HepG2 (cell line): ENCODE measurements at regions of chr3 and their contacts with region 1.

Region 1: GRCh38 chr3:30606301-30607031 is at the start of gene TGFBR2:
- DNase-seq: peak; percentile 98
- ATAC-seq: peak; percentile 98
- H3K4me3 ChIP-seq: peak within 1 kb of the TSS; percentile 96 to 100 (median 99)
- H3K27ac ChIP-seq: peak within 1 kb of the TSS; percentile 93
- H3K4me1 ChIP-seq: peaks cover 52% of the 10 kb centered on the region
- H3K27me3 ChIP-seq: peaks cover 0 to 2% of the 10 kb centered on the region in 2 experiments; a peak in 1 of 5 replicates
- CTCF ChIP-seq: 0 out of 2 replicates have a peak, but pooled peaks have one; percentile 10
- EP300 ChIP-seq: peak in 1 of 2 experiments; percentile 92; a peak in 2 of 4 replicates
- POLR2A ChIP-seq: peak; percentile 73 to 93
- RAD21 ChIP-seq: peak; percentile 92
- total RNA-seq, gene TGFBR2: 68.1 and 82.2 TPM in 2 replicates

Region 2: GRCh38 chr3:30042274-30042859 is 564.1 kb before region 1 on chr3:
- CTCF ChIA-PET with region 1: no interaction called
- POLR2A ChIA-PET with region 1: no interaction called
- in situ Hi-C with region 1: no loop called
- intact Hi-C with region 1: loop called (anchors 1 kb)
- DNase-seq: peak; percentile 66
- ATAC-seq: peak; percentile 82
- H3K4me3 ChIP-seq: no peak overlapping the region
- H3K27ac ChIP-seq: no peak overlapping the region
- H3K4me1 ChIP-seq: no peaks in the 10 kb centered on the region; the same call in 1 of the 2 replicates
- H3K27me3 ChIP-seq: no peaks in the 10 kb centered on the region
- CTCF ChIP-seq: peak; percentile 88
- EP300 ChIP-seq: no peak
- POLR2A ChIP-seq: no peak
- RAD21 ChIP-seq: peak; percentile 78

Region 3: DNA sequence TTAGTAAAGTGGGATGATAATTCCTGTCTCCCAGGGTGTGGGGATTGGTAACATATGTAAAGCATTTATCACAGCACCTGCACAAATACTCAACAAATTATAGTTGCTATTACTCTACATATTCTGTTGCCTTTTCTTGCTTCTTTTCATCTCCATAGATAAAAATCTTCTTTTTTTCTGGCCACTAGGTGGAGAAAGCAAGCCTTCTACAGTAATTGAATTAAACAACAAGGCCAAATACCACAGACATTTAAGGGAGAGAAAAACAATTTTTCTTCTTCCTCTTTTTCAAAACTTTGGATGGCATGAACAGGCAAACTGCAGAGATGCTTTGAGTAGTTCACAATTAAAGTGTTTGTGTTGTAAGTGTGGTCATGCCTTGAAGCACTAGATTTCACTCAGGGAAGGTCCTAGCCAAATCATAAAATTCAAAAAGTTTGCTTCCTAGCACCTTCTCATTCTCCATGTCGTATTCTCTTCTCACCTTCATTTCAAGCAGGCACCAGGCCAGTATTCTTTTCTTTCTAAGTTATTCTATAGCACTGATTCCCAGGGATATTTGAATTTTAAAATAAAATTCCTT is 493.5 kb before region 1 on chr3:
- CTCF ChIA-PET with region 1: no interaction called
- POLR2A ChIA-PET with region 1: no interaction called
- in situ Hi-C with region 1: loop called (anchors 10 kb)
- intact Hi-C with region 1: loop called (anchors 1 kb)
- DNase-seq: peak; percentile 58
- ATAC-seq: peak; percentile 58; the same call in 1 of the 3 replicates
- H3K4me3 ChIP-seq: no peak overlapping the region
- H3K27ac ChIP-seq: no peak overlapping the region
- H3K4me1 ChIP-seq: peaks cover 22% of the 10 kb centered on the region
- H3K27me3 ChIP-seq: no peaks in the 10 kb centered on the region
- CTCF ChIP-seq: peak; percentile 67
- EP300 ChIP-seq: no peak
- POLR2A ChIP-seq: no peak
- RAD21 ChIP-seq: peak; percentile 43; the same call in 1 of the 2 replicates

Region 4: DNA sequence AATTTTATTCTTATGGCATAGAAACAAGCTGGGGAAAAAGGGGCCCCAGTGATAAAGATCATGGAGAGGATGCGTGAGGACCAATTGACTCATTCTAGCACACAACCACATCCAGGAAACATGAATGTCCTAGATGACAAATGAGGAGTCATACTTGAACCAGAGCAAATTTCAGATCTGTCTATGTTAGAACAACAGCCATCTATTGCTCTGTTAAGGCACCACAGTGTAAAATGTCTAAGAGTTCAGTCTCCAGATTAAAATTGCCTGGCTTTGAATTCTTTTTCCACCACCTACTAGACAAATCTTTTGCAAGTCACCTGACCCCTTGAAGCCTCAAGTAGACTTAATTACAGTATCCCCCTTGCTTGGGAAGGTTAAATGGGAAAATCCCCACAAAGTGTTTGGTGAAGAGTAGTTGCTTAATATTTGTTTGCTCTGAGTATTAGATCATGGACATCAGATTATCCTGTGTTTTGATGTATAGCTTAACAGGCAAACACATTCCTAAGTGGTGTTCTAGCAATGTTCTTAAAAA is 258.7 kb before region 1 on chr3:
- CTCF ChIA-PET with region 1: no interaction called
- POLR2A ChIA-PET with region 1: interaction called, 30 read pairs
- in situ Hi-C with region 1: no loop called
- intact Hi-C with region 1: loop called (anchors 5 kb)
- DNase-seq: peak; percentile 87
- ATAC-seq: peak; percentile 66
- H3K4me3 ChIP-seq: no peak overlapping the region; a peak in 1 of 6 replicates
- H3K27ac ChIP-seq: peak overlapping the region; percentile 62
- H3K4me1 ChIP-seq: peaks cover 93% of the 10 kb centered on the region
- H3K27me3 ChIP-seq: no peaks in the 10 kb centered on the region
- CTCF ChIP-seq: no peak
- EP300 ChIP-seq: peak in 1 of 2 experiments; percentile 88; a peak in 2 of 4 replicates
- POLR2A ChIP-seq: no peak
- RAD21 ChIP-seq: no peak

Region 5: GRCh38 chr3:30511524-30512278 is 94.8 kb before region 1 on chr3:
- CTCF ChIA-PET with region 1: no interaction called
- POLR2A ChIA-PET with region 1: interaction called, 3 read pairs
- in situ Hi-C with region 1: no loop called
- intact Hi-C with region 1: loop called (anchors 5 kb)
- DNase-seq: peak; percentile 83
- ATAC-seq: peak; percentile 85
- H3K4me3 ChIP-seq: no peak overlapping the region; a peak in 1 of 6 replicates
- H3K27ac ChIP-seq: peak overlapping the region; percentile 44
- H3K4me1 ChIP-seq: peaks cover 37% of the 10 kb centered on the region
- H3K27me3 ChIP-seq: no peaks in the 10 kb centered on the region
- CTCF ChIP-seq: no peak
- EP300 ChIP-seq: peak; percentile 55 to 90; a peak in 3 of 4 replicates
- POLR2A ChIP-seq: no peak
- RAD21 ChIP-seq: no peak

Region 6: GRCh38 chr3:30578479-30578878 is 28.0 kb before region 1 on chr3:
- CTCF ChIA-PET with region 1: no interaction called
- POLR2A ChIA-PET with region 1: interaction called, 11 read pairs
- in situ Hi-C with region 1: no loop called
- intact Hi-C with region 1: no loop called
- DNase-seq: peak; percentile 61
- ATAC-seq: peak; percentile 61
- H3K4me3 ChIP-seq: no peak overlapping the region
- H3K27ac ChIP-seq: peak overlapping the region; percentile 23
- H3K4me1 ChIP-seq: peaks cover 50% of the 10 kb centered on the region
- H3K27me3 ChIP-seq: no peaks in the 10 kb centered on the region
- CTCF ChIP-seq: no peak
- EP300 ChIP-seq: peak in 1 of 2 experiments; percentile 29; a peak in 1 of 4 replicates
- POLR2A ChIP-seq: no peak
- RAD21 ChIP-seq: no peak

Region 7: DNA sequence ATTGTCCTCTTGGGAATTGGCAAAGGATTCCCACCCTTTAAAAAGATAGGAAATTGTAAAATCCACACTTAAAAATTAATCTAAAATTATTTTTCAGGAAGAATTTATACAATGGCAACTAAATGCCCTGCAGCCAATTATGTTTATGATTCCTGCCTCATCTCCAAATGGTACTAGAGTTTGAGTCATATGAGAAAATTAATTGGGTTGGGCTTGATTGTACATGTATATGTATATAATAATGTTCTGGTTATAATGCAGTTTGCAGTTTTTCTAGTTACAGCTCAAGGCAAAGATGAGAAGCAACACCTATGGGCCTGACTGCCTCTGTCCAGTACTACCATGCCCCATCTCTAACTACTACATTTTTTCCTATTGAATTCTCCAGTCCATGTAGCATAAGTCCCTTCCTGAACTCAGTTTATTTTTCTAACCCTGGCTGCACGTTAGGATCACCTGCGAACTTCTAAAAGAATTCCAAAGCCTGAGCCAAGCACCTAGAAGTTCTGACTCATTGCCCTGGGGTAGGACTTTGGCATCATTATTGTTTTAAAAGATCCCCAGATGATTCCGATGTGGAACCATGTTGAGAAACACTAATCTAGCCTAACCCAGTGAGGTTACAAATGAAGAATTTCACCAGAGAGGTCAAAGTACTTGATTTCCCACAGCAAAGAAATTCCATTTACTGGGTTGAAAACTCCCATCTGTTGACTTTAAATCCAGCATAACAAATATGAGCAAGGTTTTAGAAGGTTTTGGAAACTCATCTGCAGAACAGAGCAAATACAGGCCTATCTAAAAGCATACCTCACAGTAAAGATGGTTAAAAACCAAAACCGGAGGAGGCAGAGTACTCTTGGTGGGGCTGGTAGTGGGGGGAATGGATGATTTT is 19.3 kb after region 1 on chr3:
- CTCF ChIA-PET with region 1: no interaction called
- POLR2A ChIA-PET with region 1: interaction called, 10 read pairs
- in situ Hi-C with region 1: no loop called
- intact Hi-C with region 1: no loop called
- DNase-seq: peak; percentile 98
- ATAC-seq: peak; percentile 90
- H3K4me3 ChIP-seq: peak overlapping the region in 1 of 3 experiments; percentile 32; a peak in 1 of 6 replicates
- H3K27ac ChIP-seq: peak overlapping the region; percentile 79
- H3K4me1 ChIP-seq: peaks cover 100% of the 10 kb centered on the region
- H3K27me3 ChIP-seq: no peaks in the 10 kb centered on the region
- CTCF ChIP-seq: no peak
- EP300 ChIP-seq: peak in 1 of 2 experiments; percentile 91; a peak in 2 of 4 replicates
- POLR2A ChIP-seq: no peak; a peak in 1 of 4 replicates
- RAD21 ChIP-seq: no peak

Region 8: GRCh38 chr3:30742796-30743619 is 136.5 kb after region 1 on chr3:
- CTCF ChIA-PET with region 1: no interaction called
- POLR2A ChIA-PET with region 1: no interaction called
- in situ Hi-C with region 1: no loop called
- intact Hi-C with region 1: no loop called
- DNase-seq: no peak
- ATAC-seq: no peak
- H3K4me3 ChIP-seq: no peak overlapping the region
- H3K27ac ChIP-seq: no peak overlapping the region
- H3K4me1 ChIP-seq: no peaks in the 10 kb centered on the region
- H3K27me3 ChIP-seq: no peaks in the 10 kb centered on the region
- CTCF ChIP-seq: no peak
- EP300 ChIP-seq: no peak
- POLR2A ChIP-seq: no peak
- RAD21 ChIP-seq: no peak